Calu3 (cell line): ENCODE measurements at regions of chr6 and their contacts with region 1.

Region 1: GRCh38 chr6:100719883-100720682 is 161.0 kb downstream of the ASCC3 start:
- DNase-seq: no peak
- H3K4me3 Mint-ChIP-seq: peak overlapping the region; percentile 50
- H3K27ac Mint-ChIP-seq: peak overlapping the region; percentile 66
- H3K4me1 Mint-ChIP-seq: peaks cover 12% of the 10 kb centered on the region
- H3K27me3 Mint-ChIP-seq: no peaks in the 10 kb centered on the region
- CTCF ChIP-seq: no peak

Region 2: DNA sequence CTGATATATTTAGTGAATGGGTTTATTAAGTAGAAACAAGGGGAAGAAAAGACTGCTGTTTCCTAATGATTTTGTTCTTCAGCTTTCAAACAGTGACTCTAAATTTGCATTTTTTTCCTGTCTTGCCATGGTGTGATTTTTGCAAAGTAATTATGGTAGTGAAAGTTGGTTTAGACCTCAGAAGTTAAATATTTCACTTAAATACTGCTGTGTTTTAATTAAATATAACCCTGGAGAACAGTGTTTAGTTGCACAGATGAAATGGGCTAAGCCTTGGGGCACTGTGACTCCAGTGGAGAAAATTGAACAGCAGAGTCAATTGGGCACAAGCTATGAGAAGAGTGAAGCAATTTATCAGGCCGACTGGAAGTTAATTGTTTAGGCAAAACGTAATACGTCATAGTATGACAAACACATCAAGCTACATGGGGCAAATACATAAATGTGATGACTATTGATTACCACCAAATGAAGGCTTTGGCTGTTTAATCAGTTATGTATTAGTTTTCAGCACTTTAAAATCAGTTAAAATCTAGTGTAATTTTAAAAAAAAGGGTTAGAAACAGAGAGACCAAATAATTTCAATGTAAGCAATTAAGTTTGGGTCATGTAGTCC is 614.8 kb before region 1 on chr6:
- CTCF ChIA-PET with region 1: no interaction called
- intact Hi-C with region 1: loop called (anchors 1 kb)
- DNase-seq: no peak
- H3K4me3 Mint-ChIP-seq: no peak overlapping the region
- H3K27ac Mint-ChIP-seq: no peak overlapping the region
- H3K4me1 Mint-ChIP-seq: peaks cover 8% of the 10 kb centered on the region
- H3K27me3 Mint-ChIP-seq: no peaks in the 10 kb centered on the region
- CTCF ChIP-seq: no peak

Region 3: GRCh38 chr6:100678027-100678426 is 42.1 kb before region 1 on chr6:
- CTCF ChIA-PET with region 1: interaction called, 4 read pairs
- intact Hi-C with region 1: loop called (anchors 1 kb)
- DNase-seq: no peak
- H3K4me3 Mint-ChIP-seq: no peak overlapping the region
- H3K27ac Mint-ChIP-seq: no peak overlapping the region
- H3K4me1 Mint-ChIP-seq: no peaks in the 10 kb centered on the region
- H3K27me3 Mint-ChIP-seq: no peaks in the 10 kb centered on the region
- CTCF ChIP-seq: no peak